H1 (cell line): ENCODE measurements at regions of chr9 and their contacts with region 1.

Region 1: DNA sequence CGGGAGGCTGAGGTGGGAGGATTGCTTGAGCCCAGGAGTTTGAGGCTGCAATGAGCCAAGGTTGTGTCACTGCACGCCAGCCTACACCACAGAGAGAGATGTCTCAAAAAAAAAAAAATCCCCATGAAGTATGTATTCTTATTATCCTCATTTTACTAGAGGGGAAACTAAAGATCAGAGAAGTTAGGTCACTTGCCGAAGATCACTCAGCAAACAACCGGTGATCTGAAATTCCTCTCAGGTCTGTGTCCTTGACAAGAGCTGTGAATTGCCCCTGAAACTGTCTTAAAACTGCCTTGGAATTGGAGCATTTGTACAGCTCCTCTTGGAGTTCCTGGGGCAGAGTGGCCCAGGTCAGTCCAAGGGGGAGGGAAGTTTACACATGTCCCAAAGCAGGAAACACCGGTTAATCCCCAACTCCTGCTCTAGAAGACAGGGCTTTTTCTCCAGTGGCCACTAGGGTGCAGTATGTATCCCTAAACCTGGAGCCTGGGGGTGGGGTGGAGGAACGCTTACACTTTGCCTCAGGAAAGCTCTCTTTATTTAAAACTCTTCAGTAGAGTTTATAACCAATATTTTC is 27.6 kb downstream of the AQP7 start:
- DNase-seq: peak in 1 of 2 experiments; percentile 81
- H3K4me3 ChIP-seq: peak overlapping the region in 2 of 4 experiments; percentile 23 to 52; a peak in 1 of 8 replicates
- H3K27ac ChIP-seq: no peak overlapping the region
- H3K4me1 ChIP-seq: no peaks in the 10 kb centered on the region; a peak in 2 of 7 replicates
- H3K27me3 ChIP-seq: no peaks in the 10 kb centered on the region; a peak in 1 of 7 replicates
- CTCF ChIP-seq: peak; percentile 66 to 85 (median 79)
- EP300 ChIP-seq: no peak
- POLR2A ChIP-seq: no peak
- RAD21 ChIP-seq: peak; percentile 77 to 85

Region 2: GRCh38 chr9:33329117-33329563 is 45.6 kb before region 1 on chr9:
- CTCF ChIA-PET with region 1: no interaction called
- POLR2A ChIA-PET with region 1: no interaction called
- DNase-seq: no peak
- H3K4me3 ChIP-seq: no peak overlapping the region
- H3K27ac ChIP-seq: no peak overlapping the region
- H3K4me1 ChIP-seq: no peaks in the 10 kb centered on the region
- H3K27me3 ChIP-seq: no peaks in the 10 kb centered on the region
- CTCF ChIP-seq: no peak
- EP300 ChIP-seq: no peak
- POLR2A ChIP-seq: no peak
- RAD21 ChIP-seq: no peak

Region 3: DNA sequence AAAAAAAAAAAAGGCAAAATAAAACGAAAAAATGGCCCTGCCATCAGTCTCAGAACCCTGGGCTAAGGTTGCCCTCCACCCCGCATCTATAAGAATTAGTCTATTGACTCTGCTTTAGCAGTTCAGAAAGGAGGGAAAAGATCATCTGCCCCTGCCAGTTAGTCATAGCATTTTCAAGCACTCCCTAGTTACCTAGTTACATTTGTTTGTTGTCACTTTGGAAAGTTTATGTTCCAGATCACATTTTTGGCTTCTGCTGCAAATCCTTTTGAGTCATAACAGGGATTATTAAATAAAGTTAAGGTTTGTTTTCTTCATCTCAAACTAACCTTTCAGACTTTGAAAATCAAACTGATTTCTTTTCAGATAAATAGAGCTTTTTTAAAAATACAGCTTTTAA is 24.4 kb before region 1 on chr9:
- CTCF ChIA-PET with region 1: interaction called, 29 read pairs
- POLR2A ChIA-PET with region 1: interaction called, 4 read pairs
- DNase-seq: no peak
- H3K4me3 ChIP-seq: no peak overlapping the region
- H3K27ac ChIP-seq: no peak overlapping the region
- H3K4me1 ChIP-seq: no peaks in the 10 kb centered on the region
- H3K27me3 ChIP-seq: no peaks in the 10 kb centered on the region
- CTCF ChIP-seq: no peak
- EP300 ChIP-seq: no peak
- POLR2A ChIP-seq: no peak
- RAD21 ChIP-seq: no peak

Region 4: DNA sequence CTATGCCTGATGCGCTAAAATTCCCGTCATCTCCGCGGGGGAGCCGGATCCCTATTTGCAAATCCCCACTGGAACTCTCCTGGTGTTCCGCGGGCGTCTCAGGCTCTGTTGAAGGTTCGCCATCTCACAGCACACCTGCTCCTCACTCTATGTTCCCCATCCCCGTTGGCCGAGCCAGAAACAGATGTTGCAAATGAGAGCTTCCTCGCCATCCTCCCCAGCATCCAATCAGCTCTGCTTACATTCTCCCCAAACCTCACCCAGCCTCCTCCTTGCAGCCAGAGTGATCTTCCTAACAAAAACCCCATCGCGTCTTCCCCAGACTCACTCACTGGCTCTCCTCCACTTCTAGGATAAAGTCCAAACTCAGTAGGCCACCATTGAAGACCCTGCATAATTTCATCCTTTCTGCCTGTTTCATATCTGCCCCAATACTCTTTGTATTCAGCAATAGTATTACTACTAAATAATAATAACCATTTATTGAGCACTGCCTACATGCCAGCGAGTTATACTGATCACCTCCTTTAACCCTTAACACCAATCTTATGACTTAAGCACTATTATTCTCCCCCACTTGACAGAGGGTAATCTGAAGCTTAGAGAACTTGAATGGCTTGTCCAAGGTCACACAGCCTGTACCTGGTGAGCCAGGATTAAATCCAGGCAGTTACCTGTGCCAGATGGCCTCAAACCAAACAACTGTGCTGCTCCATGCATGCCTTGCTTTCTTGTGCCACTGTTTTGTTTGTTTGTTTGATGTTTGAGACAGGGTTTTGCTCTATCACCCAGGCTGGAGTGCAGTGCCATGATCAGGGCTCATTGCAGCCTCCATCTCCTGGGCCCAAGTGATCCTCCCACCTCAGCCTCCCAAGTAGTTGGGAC is 13.6 kb after region 1 on chr9:
- CTCF ChIA-PET with region 1: interaction called, 38 read pairs
- POLR2A ChIA-PET with region 1: interaction called, 3 read pairs
- DNase-seq: no peak
- H3K4me3 ChIP-seq: no peak overlapping the region
- H3K27ac ChIP-seq: no peak overlapping the region
- H3K4me1 ChIP-seq: peaks cover 0 to 4% (median 0%) of the 10 kb centered on the region in 4 experiments; a peak in 1 of 7 replicates
- H3K27me3 ChIP-seq: no peaks in the 10 kb centered on the region
- CTCF ChIP-seq: no peak
- EP300 ChIP-seq: no peak
- POLR2A ChIP-seq: no peak
- RAD21 ChIP-seq: no peak

Region 5: GRCh38 chr9:33404788-33405362 is 30.2 kb after region 1 on chr9:
- CTCF ChIA-PET with region 1: interaction called, 49 read pairs
- POLR2A ChIA-PET with region 1: interaction called, 4 read pairs
- DNase-seq: no peak
- H3K4me3 ChIP-seq: no peak overlapping the region
- H3K27ac ChIP-seq: no peak overlapping the region
- H3K4me1 ChIP-seq: no peaks in the 10 kb centered on the region
- H3K27me3 ChIP-seq: no peaks in the 10 kb centered on the region
- CTCF ChIP-seq: no peak
- EP300 ChIP-seq: no peak
- POLR2A ChIP-seq: no peak
- RAD21 ChIP-seq: no peak

Region 6: DNA sequence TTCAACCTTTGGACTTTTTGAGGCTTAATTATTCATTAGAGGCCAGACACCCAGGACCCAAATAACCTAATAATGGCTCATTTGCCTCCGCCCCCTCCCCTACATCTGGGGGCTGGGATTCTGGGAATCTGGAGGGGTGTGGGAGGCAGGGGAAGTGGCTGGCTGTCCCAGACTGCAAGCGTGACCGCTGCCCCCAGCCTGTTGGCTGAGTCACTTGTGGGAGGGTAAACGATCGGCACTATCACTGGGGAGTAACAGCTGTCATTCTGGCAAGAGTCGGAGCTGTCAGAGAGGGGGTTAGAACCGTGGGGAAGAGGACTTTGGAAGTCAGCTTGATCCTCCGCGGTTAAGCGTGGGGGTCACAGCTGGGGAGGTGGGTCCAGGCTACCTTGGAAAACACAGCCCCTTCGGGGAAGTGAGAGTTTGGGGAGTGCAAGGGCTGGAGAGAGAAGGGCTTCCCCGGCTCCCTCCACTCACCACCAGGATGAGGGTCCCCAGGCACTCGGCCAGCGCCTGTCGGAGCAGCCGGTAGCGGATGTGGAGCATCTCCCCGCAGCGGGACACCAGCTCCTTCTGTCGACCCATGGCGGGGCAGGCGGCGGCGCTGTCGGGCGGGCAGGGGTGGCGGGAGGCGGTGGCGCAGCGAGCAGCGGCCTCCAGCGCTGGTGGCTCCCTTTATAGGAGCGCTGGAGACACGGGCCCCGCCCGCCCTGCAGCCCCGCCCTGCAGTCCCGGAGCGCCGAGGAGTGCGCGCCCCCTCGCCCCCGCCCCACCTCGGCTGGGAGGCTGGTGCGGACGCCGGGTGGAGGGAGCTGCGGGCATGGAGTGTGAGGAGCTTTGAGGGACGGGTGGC is 72.4 kb after region 1 on chr9 and contains the start of gene AQP3:
- CTCF ChIA-PET with region 1: interaction called, 154 read pairs
- POLR2A ChIA-PET with region 1: interaction called, 6 read pairs
- DNase-seq: peak in 1 of 2 experiments; percentile 85
- H3K4me3 ChIP-seq: peak within 1 kb of the TSS; percentile 46 to 67 (median 57)
- H3K27ac ChIP-seq: no peak within 1 kb of the TSS
- H3K4me1 ChIP-seq: peaks cover 0 to 33% (median 16%) of the 10 kb centered on the region in 4 experiments; a peak in 6 of 7 replicates
- H3K27me3 ChIP-seq: peaks cover 0 to 23% (median 12%) of the 10 kb centered on the region in 4 experiments; a peak in 5 of 7 replicates
- CTCF ChIP-seq: peak; percentile 13 to 58 (median 46)
- EP300 ChIP-seq: no peak
- POLR2A ChIP-seq: no peak
- RAD21 ChIP-seq: peak; percentile 19 to 50; a peak in 2 of 4 replicates
- total RNA-seq, gene AQP3: 2.6 and 3.0 TPM in 2 replicates

Region 7: DNA sequence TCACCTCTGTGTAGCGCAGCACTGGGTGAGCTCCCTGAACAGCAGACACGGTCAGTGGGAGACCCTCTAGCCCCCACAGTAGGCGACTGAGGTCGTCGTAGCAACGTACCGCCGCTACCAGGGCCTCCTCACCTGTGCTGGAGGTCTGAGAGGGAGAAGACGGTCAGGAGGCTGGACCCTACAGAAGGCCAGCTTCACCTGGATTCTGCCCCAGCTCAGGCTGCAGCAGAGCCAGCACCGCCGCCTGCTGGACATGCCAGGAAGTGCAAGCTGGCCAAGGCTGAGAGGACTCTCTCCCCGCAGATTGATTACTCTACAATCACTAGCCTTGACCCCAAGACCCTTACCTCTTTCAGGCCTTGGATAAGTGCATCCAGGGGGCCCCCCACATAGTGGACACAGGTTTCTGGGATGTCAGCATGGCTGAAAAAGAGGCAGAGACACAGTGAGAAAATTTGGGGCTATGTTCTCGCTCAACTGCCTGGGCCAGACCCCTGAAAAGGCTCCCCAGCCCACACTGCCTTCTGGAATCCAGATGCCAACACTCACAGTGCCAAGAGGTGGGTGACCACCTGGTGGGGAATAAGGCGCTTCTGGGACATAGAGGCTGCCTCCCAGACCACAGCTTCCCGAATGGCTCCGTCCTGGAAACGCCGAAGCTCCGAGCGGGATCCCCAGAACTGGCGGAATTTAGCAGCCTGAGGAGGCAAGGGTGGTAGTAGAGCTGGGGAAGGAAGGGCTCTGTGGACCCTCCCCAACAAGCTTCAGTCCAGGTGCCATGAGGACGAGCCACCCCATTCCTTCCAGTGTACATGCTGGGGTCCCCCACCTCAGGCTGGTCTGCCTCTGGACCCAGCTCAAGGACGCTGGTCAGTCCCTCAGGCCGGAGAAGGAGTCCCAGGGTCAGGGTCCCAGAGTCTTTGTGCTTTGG is 92.1 kb after region 1 on chr9:
- CTCF ChIA-PET with region 1: interaction called, 153 read pairs
- POLR2A ChIA-PET with region 1: interaction called, 3 read pairs
- DNase-seq: peak in 1 of 2 experiments; percentile 96
- H3K4me3 ChIP-seq: no peak overlapping the region
- H3K27ac ChIP-seq: peak overlapping the region; percentile 5; the same call in 1 of the 2 replicates
- H3K4me1 ChIP-seq: no peaks in the 10 kb centered on the region
- H3K27me3 ChIP-seq: no peaks in the 10 kb centered on the region
- CTCF ChIP-seq: peak; percentile 94 to 100 (median 99)
- EP300 ChIP-seq: no peak
- POLR2A ChIP-seq: no peak
- RAD21 ChIP-seq: peak; percentile 89 to 95